ENCODE measurements at regions of chr19 and their contacts with region 1.

Region 1: GRCh38 chr19:732148-733069 is 18.5 kb upstream of the MISP start:
- DNase-seq: no peak
- H3K4me3 ChIP-seq: no peak overlapping the region
- H3K27ac ChIP-seq: no peak overlapping the region
- H3K4me1 ChIP-seq: peaks cover 4 to 22% (median 5%) of the 10 kb centered on the region in 3 donors
- H3K27me3 ChIP-seq: no peaks in the 10 kb centered on the region
- CTCF ChIP-seq: no peak
- POLR2A ChIP-seq: no peak

Region 2: DNA sequence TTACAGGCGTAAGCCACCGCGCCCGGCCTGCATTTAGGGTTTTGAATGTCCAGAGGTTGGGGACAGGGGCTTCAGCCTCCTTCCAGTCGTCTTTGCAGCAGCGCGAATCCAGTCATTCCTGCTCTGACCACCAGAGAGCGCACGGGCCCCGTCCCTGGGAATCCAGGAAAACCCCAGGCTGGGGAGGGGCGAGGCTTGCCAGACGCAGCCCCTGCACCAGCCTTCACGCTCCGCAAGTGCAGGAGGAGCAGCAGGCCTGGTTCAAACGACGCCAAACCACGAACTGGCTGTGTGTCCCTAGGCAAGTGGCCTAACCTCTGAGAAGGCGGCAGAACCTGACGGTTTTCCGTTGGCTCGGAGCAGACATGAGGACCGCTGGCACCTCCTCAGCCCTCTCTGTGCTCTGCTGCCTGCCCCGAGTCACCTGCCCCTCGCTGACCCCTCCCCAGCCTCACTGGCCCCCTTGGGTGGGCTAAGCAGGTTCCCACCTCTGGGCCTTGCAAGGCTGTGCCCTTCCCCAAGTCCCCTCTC is 67.4 kb before region 1 on chr19:
- intact Hi-C with region 1: loop called (anchors 5 kb)
- DNase-seq: no peak
- H3K4me3 ChIP-seq: peak overlapping the region in 3 of 4 donors; percentile 3 to 55 (median 15)
- H3K27ac ChIP-seq: peak overlapping the region in 2 of 4 donors; percentile 15 to 97
- H3K4me1 ChIP-seq: peaks cover 28 to 44% (median 34%) of the 10 kb centered on the region in 3 donors
- H3K27me3 ChIP-seq: no peaks in the 10 kb centered on the region
- CTCF ChIP-seq: peak; percentile 82 to 95 (median 92)
- POLR2A ChIP-seq: no peak